Psoas muscle (tissue), 8 donors: ENCODE measurements at regions of chr17 and their contacts with region 1.

Region 1: DNA sequence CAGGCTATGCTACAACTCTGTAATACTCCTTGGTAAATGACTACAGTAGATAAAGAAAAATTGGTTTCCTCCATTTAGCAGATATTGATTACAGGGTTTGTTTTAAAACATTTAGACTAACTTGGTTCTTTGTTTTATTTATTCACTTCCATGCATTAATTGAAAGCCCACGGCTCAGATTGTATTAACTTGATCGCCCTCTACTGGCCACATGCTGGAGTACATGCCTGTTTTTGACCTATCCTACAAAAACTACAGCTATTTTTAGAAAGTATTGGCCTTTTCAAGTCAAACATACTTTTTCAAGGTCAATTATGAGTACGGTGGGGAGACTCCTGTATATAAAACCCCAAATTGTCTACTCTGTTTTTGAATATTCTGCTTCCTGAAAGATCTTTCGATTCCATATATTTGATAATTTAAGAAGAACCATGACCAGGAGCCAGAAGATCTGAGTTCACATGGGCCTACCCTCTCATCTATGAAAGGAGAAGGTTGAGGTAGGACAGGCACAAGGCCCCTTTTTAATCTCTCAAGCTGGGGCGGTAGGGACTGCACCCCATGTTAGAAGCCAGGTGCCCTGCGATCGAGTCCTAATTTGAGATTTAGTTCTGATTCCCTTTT is 51.8 kb downstream of the CA10 start:
- DNase-seq: peak in 1 of 2 donors; percentile 18
- ATAC-seq: no peak
- H3K4me3 ChIP-seq: no peak overlapping the region
- H3K27ac ChIP-seq: no peak overlapping the region
- H3K4me1 ChIP-seq: no peaks in the 10 kb centered on the region
- H3K27me3 ChIP-seq: no peaks in the 10 kb centered on the region
- CTCF ChIP-seq: peak; percentile 79

Region 2: DNA sequence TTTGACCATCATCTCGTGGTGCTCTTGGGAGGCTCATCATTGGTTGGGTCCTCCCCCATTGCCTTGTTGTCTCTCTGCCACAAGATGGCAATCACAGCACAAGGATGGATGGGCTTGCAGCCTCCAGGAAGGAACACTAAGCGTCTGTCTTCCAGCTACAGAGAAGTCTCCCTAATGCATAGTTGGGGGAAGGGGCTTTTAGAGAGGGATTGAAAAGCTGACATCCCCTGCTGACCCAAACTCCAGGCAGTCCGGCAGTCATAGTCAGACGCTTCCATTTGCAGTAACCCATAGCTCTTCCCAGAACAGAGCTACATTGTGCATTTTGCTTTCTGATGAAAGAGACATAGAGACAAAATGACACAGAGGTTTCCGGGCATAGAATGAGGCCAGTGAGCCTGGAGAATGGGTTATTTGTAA is 735.0 kb before region 1 on chr17:
- intact Hi-C with region 1: loop called (anchors 10 kb)
- DNase-seq: no peak
- ATAC-seq: peak in 1 of 4 donors; percentile 69
- H3K4me3 ChIP-seq: no peak overlapping the region
- H3K27ac ChIP-seq: no peak overlapping the region
- H3K4me1 ChIP-seq: no peaks in the 10 kb centered on the region
- H3K27me3 ChIP-seq: no peaks in the 10 kb centered on the region
- CTCF ChIP-seq: peak; percentile 39

Region 3: DNA sequence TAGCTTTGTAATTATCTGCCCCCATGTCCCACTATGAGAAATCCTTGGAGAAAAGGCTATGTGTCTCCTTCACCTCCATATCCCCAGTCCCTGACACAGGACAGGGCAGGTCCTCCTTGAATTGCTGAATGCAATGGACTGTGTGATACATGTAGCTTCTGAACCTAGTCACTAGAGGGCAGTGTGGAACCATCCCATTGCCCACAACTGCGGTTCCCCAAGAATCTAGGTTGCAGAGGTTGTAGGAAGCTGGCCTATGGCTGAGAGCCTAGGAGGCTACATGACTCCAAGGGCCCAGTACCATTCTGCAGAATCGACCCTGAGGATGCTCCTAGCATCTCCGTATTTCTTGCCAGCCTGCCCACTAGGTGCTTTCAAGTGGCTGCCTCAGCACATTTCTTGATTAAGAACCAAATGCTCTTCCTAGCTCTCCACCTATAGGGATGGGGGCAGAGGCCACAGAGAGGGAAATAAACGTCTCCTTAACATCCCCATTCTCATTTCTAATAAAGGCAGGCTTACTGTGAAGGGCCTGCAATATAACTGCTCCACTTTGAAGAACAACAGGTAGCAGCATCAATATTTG is 342.3 kb before region 1 on chr17:
- intact Hi-C with region 1: loop called (anchors 5 to 10 kb)
- DNase-seq: peak in 1 of 2 donors; percentile 18
- ATAC-seq: peak; percentile 79 to 89 (median 84)
- H3K4me3 ChIP-seq: no peak overlapping the region
- H3K27ac ChIP-seq: no peak overlapping the region
- H3K4me1 ChIP-seq: no peaks in the 10 kb centered on the region
- H3K27me3 ChIP-seq: no peaks in the 10 kb centered on the region
- CTCF ChIP-seq: peak; percentile 81